Calu3 (cell line): ENCODE measurements at regions of chr10 and their contacts with region 1.

Region 1: GRCh38 chr10:96229568-96230030 is 41.8 kb downstream of the BLNK start:
- DNase-seq: peak; percentile 75
- H3K4me3 Mint-ChIP-seq: peak overlapping the region; percentile 14
- H3K27ac Mint-ChIP-seq: peak overlapping the region; percentile 5
- H3K4me1 Mint-ChIP-seq: no peaks in the 10 kb centered on the region
- H3K27me3 Mint-ChIP-seq: no peaks in the 10 kb centered on the region
- CTCF ChIP-seq: peak; percentile 82

Region 2: DNA sequence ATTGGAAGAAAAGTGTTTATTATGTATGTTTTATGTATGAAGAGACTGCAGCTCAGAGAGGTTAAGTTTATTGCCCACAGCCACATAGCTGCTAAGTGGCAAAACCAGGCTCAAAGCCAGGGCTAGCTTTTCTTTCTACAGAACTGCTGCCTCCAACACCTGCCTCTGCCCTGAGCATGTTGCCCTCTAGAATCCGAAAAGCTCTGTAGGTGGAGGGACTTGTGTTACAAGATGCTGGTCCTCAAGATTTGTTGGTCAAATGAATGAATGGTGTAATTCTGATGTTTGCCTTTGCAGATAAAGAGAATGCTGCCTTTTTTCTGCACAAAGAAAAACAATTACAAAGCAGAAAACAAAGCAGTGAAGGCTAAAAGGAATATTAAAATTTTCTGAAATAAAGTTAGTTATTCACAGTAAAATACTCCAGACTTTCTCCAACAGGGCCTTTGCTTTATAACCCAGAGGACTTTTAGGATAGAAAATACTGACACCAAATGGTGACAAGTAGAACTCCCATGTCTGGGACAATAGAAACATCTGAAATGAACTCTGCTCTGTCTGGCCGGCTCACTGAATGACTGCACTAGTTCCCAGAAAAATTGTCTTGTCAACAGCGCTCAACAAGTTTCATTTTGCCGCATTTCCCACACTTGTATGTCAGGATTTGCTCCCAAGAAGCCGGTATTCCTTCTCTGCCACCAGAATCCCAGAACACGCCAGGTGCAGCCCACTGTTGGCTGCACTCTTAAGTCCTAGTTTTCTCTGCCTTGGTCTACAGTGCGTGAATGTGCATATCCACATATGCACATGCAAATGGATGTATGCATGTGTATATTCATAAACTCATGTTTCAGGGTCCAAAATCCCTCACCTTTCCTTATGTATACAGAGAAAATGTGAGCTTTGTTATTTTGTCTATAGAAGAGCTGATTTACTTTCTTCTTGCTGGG is 63.6 kb after region 1 on chr10:
- CTCF ChIA-PET with region 1: interaction called, 55 read pairs
- intact Hi-C with region 1: loop called (anchors 1 kb)
- DNase-seq: no peak
- H3K4me3 Mint-ChIP-seq: no peak overlapping the region
- H3K27ac Mint-ChIP-seq: no peak overlapping the region
- H3K4me1 Mint-ChIP-seq: peaks cover 13% of the 10 kb centered on the region
- H3K27me3 Mint-ChIP-seq: peaks cover 25% of the 10 kb centered on the region
- CTCF ChIP-seq: peak; percentile 42

Region 3: DNA sequence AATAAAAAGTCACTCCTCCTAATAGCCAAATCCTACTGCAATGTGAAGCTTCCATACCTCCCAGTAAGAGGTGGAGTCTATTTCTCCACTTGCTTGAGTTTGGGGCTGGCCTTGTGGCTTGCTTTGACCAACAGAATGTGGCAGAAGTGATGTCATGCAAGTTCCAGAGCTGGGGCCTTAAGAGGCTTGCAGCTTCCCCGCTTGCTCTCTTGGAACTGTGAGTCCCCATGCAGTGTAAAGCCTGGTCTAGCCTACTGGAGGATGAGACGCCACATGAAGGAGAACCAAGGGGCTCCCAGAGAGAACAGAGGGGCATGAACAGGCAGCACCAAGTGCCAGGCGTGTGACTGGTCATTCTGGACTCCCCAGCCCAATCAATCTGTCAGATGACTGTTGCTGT is 187.8 kb after region 1 on chr10:
- CTCF ChIA-PET with region 1: no interaction called
- intact Hi-C with region 1: no loop called
- DNase-seq: no peak
- H3K4me3 Mint-ChIP-seq: no peak overlapping the region
- H3K27ac Mint-ChIP-seq: no peak overlapping the region
- H3K4me1 Mint-ChIP-seq: no peaks in the 10 kb centered on the region
- H3K27me3 Mint-ChIP-seq: peaks cover 19% of the 10 kb centered on the region
- CTCF ChIP-seq: no peak

Region 4: GRCh38 chr10:96431211-96431970 is 201.8 kb after region 1 on chr10:
- CTCF ChIA-PET with region 1: no interaction called
- intact Hi-C with region 1: no loop called
- DNase-seq: no peak
- H3K4me3 Mint-ChIP-seq: no peak overlapping the region
- H3K27ac Mint-ChIP-seq: no peak overlapping the region
- H3K4me1 Mint-ChIP-seq: no peaks in the 10 kb centered on the region
- H3K27me3 Mint-ChIP-seq: peaks cover 42% of the 10 kb centered on the region
- CTCF ChIP-seq: no peak

Region 5: DNA sequence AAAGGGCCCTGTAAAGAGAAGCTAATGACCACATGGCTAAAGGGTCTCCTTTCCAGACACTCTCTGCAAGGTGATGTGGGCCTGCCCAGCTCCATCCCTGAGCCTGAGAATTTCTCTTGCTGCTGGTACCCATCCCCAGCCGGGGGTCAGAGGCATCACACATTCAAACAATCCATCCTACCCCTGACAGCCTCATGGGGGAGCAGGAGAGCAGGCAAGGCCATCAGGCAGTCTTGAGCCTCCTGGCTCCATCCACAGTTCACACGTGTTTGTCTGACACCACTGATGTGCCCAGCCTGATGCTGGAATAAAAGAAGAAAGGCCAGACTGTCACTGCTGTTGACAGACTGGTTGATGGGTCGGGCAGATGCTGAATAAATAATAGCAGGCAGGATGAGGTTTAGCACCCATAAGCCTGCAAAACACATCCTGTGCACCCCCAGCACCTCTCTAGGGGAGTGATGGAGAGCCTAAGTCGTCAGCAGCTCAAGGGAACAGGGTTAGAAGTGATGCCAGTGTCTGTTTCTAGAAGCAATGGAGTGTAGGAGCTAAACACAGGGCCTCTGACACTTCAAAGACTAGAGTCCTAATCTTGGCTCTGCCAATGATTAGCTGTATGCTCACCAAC is 240.6 kb after region 1 on chr10:
- CTCF ChIA-PET with region 1: no interaction called
- intact Hi-C with region 1: no loop called
- DNase-seq: peak; percentile 51
- H3K4me3 Mint-ChIP-seq: no peak overlapping the region
- H3K27ac Mint-ChIP-seq: no peak overlapping the region
- H3K4me1 Mint-ChIP-seq: no peaks in the 10 kb centered on the region
- H3K27me3 Mint-ChIP-seq: peaks cover 94% of the 10 kb centered on the region
- CTCF ChIP-seq: no peak